ENCODE measurements at regions of chr16 and their contacts with region 1.

Region 1: GRCh38 chr16:58110571-58111301 is 18.4 kb downstream of the CFAP20 start:
- DNase-seq: no peak

Region 2: GRCh38 chr16:57906382-57907316 is 204.1 kb before region 1 on chr16:
- intact Hi-C with region 1: no loop called
- DNase-seq: no peak

Region 3: DNA sequence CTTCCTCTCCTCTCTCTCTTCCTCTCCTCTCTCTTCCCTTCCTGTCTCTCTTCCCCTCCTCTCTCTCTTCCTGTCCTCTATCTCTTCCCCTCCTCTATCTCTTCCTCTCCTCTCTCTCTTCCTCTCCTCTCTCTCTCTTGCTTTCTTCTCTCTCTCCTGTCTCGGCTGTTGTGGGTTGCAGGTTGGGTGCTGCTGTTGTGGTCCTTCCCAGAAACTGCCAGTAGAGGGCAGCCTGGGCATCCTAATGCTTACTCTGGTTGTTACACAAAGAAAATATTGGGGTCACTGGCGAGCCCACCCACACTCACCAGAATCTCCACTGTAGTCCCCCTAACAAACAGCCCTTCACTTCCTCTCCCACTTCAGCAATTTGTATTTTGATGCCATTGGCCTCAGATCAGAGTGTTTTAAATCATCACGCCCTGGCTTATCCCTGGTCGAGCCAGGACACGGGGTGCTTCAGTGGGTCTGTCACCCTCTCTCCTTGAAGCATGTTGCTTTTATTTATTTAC is 90.1 kb before region 1 on chr16:
- intact Hi-C with region 1: loop called in 1 of 2 experiments (anchors 5 kb)
- DNase-seq: no peak

Region 4: GRCh38 chr16:59013930-59014329 is 903.2 kb after region 1 on chr16:
- intact Hi-C with region 1: loop called in 1 of 2 experiments (anchors 10 kb)
- DNase-seq: no peak

Measured in posterior vena cava (tissue), 2 donors.